K562 (cell line): ENCODE measurements at regions of chr19 and their contacts with region 1.

Region 1: GRCh38 chr19:5690125-5690954 is at the start of gene RPL36:
- DNase-seq: peak; percentile 77 to 98 (median 87)
- ATAC-seq: peak; percentile 57
- H3K4me3 ChIP-seq: peak within 1 kb of the TSS; percentile 100
- H3K27ac ChIP-seq: peak within 1 kb of the TSS; percentile 96
- H3K4me1 ChIP-seq: peaks cover 20 to 70% of the 10 kb centered on the region in 2 experiments
- H3K27me3 ChIP-seq: no peaks in the 10 kb centered on the region
- CTCF ChIP-seq: peak; percentile 93 to 99 (median 98)
- EP300 ChIP-seq: no peak
- POLR2A ChIP-seq: peak; percentile 99
- RAD21 ChIP-seq: peak in 1 of 2 experiments; percentile 52; a peak in 1 of 4 replicates
- polyA plus RNA-seq, gene RPL36: 3,132 to 3,412 TPM

Region 2: GRCh38 chr19:5547881-5548280 is 142.5 kb before region 1 on chr19:
- CTCF ChIA-PET with region 1: no interaction called
- POLR2A ChIA-PET with region 1: interaction called, 6 read pairs
- in situ Hi-C with region 1: no loop called
- intact Hi-C with region 1: loop called (anchors 2 kb)
- DNase-seq: peak; percentile 46 to 60 (median 51)
- ATAC-seq: peak; percentile 73
- H3K4me3 ChIP-seq: no peak overlapping the region
- H3K27ac ChIP-seq: no peak overlapping the region
- H3K4me1 ChIP-seq: no peaks in the 10 kb centered on the region
- H3K27me3 ChIP-seq: peaks cover 7 to 14% of the 10 kb centered on the region in 2 experiments; a peak in 2 of 5 replicates
- CTCF ChIP-seq: peak; percentile 76 to 87 (median 77)
- EP300 ChIP-seq: no peak
- POLR2A ChIP-seq: no peak
- RAD21 ChIP-seq: peak; percentile 25 to 72; a peak in 3 of 4 replicates

Region 3: DNA sequence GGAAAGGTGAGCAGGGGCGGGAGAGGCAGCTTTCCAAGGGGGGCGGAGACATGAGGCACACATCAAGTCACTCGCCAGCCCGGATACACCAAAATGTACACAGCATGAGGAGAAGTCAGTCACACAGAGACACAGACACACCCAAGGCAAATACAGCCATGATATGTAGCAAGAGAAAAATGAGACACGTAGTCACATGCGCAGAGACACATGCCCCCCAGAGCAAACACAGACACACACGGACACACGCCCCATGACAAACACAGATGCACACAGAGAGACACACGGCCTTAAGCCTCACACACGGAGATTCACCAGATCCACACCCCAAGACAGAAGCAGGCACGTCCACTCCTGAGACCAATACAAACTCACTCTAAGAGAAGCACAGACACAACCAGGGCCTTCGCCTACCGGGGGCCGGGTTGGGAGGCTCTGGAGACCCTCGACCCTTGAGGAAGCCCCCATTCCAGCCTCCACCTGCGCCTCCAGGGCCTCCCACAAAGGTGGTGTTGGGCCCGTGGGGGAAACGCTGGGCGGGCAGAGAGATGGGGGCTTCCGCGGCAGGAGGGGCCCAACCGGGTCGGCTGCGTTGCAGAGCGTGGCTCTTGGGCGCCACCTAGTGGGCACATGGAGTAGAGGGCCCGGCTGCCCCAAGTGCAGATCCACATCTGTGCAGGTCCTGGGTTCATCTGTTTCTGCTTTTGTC is 112.4 kb before region 1 on chr19:
- CTCF ChIA-PET with region 1: no interaction called
- POLR2A ChIA-PET with region 1: no interaction called
- in situ Hi-C with region 1: no loop called
- intact Hi-C with region 1: no loop called
- DNase-seq: peak; percentile 78 to 90 (median 88)
- ATAC-seq: peak; percentile 99
- H3K4me3 ChIP-seq: no peak overlapping the region; the same call in 1 of the 2 replicates
- H3K27ac ChIP-seq: no peak overlapping the region; the same call in 2 of the 3 replicates
- H3K4me1 ChIP-seq: peaks cover 0 to 12% of the 10 kb centered on the region in 2 experiments; a peak in 3 of 5 replicates
- H3K27me3 ChIP-seq: no peaks in the 10 kb centered on the region
- CTCF ChIP-seq: peak; percentile 89 to 92 (median 89)
- EP300 ChIP-seq: no peak
- POLR2A ChIP-seq: no peak
- RAD21 ChIP-seq: peak; percentile 60 to 82

Region 4: GRCh38 chr19:5622463-5623396 is 67.6 kb before region 1 on chr19 and contains the starts of genes SAFB and SAFB2:
- CTCF ChIA-PET with region 1: no interaction called
- POLR2A ChIA-PET with region 1: interaction called, 14 read pairs
- in situ Hi-C with region 1: no loop called
- intact Hi-C with region 1: loop called (anchors 10 kb)
- DNase-seq: peak; percentile 98 to 100 (median 98)
- ATAC-seq: peak; percentile 91
- H3K4me3 ChIP-seq: peak within 1 kb of the TSS; percentile 82
- H3K27ac ChIP-seq: peak within 1 kb of the TSS; percentile 97
- H3K4me1 ChIP-seq: peaks cover 30 to 47% of the 10 kb centered on the region in 2 experiments
- H3K27me3 ChIP-seq: no peaks in the 10 kb centered on the region
- CTCF ChIP-seq: no peak
- EP300 ChIP-seq: 0 out of 2 replicates have a peak, but pooled peaks have one; percentile 3
- POLR2A ChIP-seq: peak; percentile 97
- RAD21 ChIP-seq: no peak
- polyA plus RNA-seq, gene SAFB: 1.1 to 1.8 TPM
- polyA plus RNA-seq, gene SAFB2: 4.5 to 6.9 TPM

Region 5: DNA sequence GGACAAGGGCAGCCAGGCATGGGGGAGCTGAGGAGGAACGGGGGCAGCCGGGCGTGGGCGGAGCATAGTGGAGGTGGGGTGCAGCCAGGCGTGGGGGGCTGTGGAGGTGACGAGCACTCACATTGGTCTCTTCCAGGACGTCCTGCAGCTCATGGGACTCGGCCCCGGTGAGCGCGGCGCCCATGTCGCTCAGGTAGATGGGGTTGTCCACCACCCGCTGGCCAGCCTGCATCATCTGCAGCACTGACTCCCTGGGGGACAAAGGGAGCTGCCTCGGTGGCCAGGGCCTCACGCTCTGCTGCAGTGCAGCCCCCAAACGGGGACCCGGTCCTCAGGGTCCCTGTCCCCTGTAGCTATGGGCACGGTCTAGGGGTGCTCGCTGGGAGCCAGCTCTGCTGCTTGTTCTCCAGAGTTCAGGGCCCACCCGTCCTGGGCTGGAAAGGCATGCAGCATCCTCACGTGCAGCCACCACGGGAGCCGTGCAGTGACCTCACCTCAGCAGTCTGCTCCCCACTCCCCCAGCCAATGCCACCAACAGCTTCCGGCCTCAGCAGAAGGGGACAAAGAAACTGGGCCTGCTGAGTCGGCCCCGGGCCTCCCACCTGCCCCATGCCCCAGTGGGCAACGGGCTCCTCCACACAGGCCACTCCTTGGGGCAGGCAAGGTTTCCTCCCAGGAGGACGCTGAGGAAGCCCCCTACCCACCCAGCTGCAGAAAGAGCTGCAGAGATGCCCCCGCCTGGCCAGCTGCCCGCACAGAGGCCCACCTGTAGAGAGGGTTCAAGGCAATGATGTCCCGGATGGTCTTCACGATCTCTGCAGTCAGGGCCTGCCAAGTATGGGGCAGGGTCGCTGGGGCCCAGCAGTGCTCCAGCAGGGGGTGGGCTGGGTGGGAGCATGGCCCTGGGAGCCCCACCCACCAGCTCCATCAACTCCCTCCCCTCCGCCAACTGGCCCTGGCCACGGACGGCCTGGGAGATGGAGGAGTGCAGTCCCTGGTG is 17.5 kb after region 1 on chr19:
- CTCF ChIA-PET with region 1: no interaction called
- POLR2A ChIA-PET with region 1: interaction called, 20 read pairs
- in situ Hi-C with region 1: no loop called
- intact Hi-C with region 1: no loop called
- DNase-seq: peak in 2 of 4 experiments; percentile 29 to 38
- ATAC-seq: peak; percentile 9
- H3K4me3 ChIP-seq: no peak overlapping the region
- H3K27ac ChIP-seq: no peak overlapping the region
- H3K4me1 ChIP-seq: peaks cover 0 to 28% of the 10 kb centered on the region in 2 experiments; a peak in 2 of 5 replicates
- H3K27me3 ChIP-seq: no peaks in the 10 kb centered on the region
- CTCF ChIP-seq: no peak
- EP300 ChIP-seq: no peak
- POLR2A ChIP-seq: 0 out of 2 replicates have a peak, but pooled peaks have one; percentile 19
- RAD21 ChIP-seq: no peak

Region 6: DNA sequence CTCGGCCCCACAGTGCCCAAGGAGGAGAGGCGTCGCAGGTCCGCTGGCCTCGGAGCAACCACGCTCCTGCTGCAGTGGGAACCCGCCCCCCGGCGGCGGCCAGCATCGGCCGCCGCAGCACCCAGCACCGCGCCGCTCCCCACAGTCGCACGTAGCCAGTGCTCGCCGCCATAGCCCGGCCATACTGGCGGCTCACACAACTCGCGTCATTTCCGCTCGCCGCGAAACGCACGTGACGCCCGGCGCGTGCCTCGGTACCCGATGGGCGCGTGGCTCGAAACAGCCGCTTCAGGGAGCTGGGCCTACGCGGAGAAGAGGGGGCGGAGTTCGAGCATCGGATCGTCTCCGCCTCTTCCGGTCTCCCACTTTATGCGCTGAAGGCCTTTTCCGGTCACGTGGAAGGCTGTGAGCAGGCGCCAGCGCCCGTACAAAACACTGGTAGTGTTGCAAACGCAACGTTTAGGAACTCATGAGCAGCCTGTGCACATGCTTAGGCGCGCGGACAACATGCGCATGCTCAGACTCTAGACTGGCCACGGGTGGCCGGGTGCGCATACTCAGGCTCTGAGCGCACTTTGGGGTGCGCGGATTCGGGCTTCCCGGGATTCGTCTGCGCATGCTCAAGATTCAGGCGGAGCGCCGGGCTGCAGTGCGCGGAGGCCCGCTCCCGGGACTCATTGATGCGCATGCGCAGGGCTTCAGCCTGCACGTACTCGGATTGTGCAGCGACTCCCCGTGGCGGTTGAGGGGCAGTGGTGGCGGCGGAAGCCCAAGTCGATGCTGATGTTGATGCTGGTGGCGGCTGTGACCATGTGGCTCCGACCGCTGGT is 29.8 kb after region 1 on chr19 and contains the starts of genes CATSPERD and LONP1:
- CTCF ChIA-PET with region 1: interaction called, 4 read pairs
- POLR2A ChIA-PET with region 1: interaction called, 31 read pairs
- in situ Hi-C with region 1: no loop called
- intact Hi-C with region 1: loop called (anchors 1 kb)
- DNase-seq: peak; percentile 99
- ATAC-seq: peak; percentile 91
- H3K4me3 ChIP-seq: peak within 1 kb of the TSS; percentile 98
- H3K27ac ChIP-seq: peak within 1 kb of the TSS; percentile 99
- H3K4me1 ChIP-seq: peaks cover 13 to 28% of the 10 kb centered on the region in 2 experiments; a peak in 4 of 5 replicates
- H3K27me3 ChIP-seq: no peaks in the 10 kb centered on the region
- CTCF ChIP-seq: peak; percentile 92 to 96 (median 93)
- EP300 ChIP-seq: peak; percentile 65; the same call in 1 of the 2 replicates
- POLR2A ChIP-seq: peak; percentile 87
- RAD21 ChIP-seq: peak; percentile 41 to 56
- polyA plus RNA-seq, gene CATSPERD: not detected
- polyA plus RNA-seq, gene LONP1: 1.1 to 3.7 TPM

Region 7: DNA sequence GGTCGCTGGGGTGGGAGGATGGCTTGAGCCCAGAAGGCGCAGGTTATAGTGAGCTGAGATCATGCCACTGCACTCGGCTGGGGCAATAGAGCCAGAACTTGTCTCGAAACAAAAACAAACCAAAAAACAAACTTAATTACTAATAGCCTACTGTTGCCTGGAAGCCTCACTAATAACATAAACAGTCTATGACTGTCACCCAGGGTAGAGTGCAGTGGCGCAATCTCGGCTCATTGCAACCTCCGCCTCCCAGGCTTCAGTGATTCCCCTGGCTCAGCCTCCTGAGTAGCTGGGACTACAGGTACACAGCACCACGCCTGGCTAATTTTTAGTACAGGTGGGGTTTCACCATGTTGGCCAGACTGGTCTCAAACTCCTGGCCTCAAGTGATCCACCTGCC is 48.1 kb after region 1 on chr19:
- CTCF ChIA-PET with region 1: no interaction called
- POLR2A ChIA-PET with region 1: interaction called, 12 read pairs
- in situ Hi-C with region 1: no loop called
- intact Hi-C with region 1: no loop called
- DNase-seq: no peak
- ATAC-seq: no peak
- H3K4me3 ChIP-seq: no peak overlapping the region
- H3K27ac ChIP-seq: no peak overlapping the region
- H3K4me1 ChIP-seq: no peaks in the 10 kb centered on the region; a peak in 1 of 5 replicates
- H3K27me3 ChIP-seq: peaks cover 10 to 44% of the 10 kb centered on the region in 2 experiments; a peak in 4 of 5 replicates
- CTCF ChIP-seq: no peak
- EP300 ChIP-seq: no peak
- POLR2A ChIP-seq: no peak
- RAD21 ChIP-seq: no peak